Upper lobe of right lung (tissue), 1 donor: ENCODE measurements at regions of chr12 and their contacts with region 1.

Region 1: GRCh38 chr12:39103552-39104165 is 198.3 kb upstream of the CPNE8 start:
- DNase-seq: no peak
- ATAC-seq: peak; percentile 99
- H3K4me3 ChIP-seq: no peak overlapping the region
- H3K27ac ChIP-seq: no peak overlapping the region
- H3K4me1 ChIP-seq: no peaks in the 10 kb centered on the region
- H3K27me3 ChIP-seq: no peaks in the 10 kb centered on the region
- CTCF ChIP-seq: peak; percentile 77

Region 2: GRCh38 chr12:38921025-38921677 is 182.5 kb before region 1 on chr12:
- intact Hi-C with region 1: loop called (anchors 5 kb)
- DNase-seq: no peak
- ATAC-seq: peak; percentile 91
- H3K4me3 ChIP-seq: no peak overlapping the region
- H3K27ac ChIP-seq: no peak overlapping the region
- H3K4me1 ChIP-seq: no peaks in the 10 kb centered on the region
- H3K27me3 ChIP-seq: no peaks in the 10 kb centered on the region
- CTCF ChIP-seq: peak; percentile 60

Region 3: DNA sequence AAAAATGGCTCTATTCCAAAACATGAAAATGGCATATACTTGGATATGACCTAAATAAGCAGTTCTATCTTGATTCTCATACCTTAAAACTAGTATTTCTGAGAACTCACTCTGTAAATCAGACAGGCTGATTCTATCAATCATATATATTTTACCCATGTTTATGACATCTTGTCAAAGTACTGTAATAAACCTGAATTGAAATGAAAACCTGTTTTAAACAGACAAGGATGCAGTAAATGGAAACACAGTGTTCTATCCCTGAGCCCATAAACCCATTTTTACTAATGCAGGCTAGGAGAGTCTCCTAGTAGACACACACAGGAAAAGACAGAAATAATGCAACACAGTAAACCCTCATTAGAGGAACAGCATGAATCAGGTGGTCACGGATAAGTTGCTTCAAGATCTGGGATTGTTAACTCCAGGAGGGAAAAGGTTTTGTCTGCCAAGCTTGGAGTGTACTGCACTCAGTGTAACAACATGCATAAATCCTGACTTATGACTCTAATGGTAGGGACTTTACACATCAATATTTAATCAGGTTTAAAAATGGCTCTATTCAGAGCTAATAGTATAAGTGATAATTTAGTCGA is 104.7 kb before region 1 on chr12:
- intact Hi-C with region 1: no loop called
- DNase-seq: no peak
- ATAC-seq: no peak
- H3K4me3 ChIP-seq: no peak overlapping the region
- H3K27ac ChIP-seq: no peak overlapping the region
- H3K4me1 ChIP-seq: no peaks in the 10 kb centered on the region
- H3K27me3 ChIP-seq: no peaks in the 10 kb centered on the region
- CTCF ChIP-seq: no peak